ENCODE measurements at regions of chr6 and their contacts with region 1.

Region 1: DNA sequence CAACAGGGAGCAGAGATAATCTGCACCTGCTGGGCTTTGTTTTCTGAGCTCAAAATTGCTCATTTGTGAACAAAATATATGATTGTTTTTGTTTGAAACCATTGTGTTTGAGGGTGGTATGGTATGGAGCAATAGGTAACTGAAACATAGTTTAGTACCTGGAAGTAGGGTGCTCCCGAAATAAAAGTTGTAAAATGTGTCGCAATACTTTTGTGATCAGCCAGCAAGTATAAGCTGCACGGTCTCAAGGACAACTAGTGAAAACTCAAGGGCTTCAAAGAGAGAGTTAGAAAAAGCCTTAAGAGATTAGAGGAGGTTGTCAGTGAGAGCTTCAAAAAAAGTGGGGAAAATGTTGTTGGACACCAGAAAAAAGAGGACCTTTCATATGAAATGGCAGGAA is 579.8 kb upstream of the POU3F2 start:
- DNase-seq: no peak
- H3K4me3 ChIP-seq: no peak overlapping the region
- H3K27ac ChIP-seq: no peak overlapping the region
- H3K4me1 ChIP-seq: no peaks in the 10 kb centered on the region
- H3K27me3 ChIP-seq: no peaks in the 10 kb centered on the region
- CTCF ChIP-seq: no peak

Region 2: DNA sequence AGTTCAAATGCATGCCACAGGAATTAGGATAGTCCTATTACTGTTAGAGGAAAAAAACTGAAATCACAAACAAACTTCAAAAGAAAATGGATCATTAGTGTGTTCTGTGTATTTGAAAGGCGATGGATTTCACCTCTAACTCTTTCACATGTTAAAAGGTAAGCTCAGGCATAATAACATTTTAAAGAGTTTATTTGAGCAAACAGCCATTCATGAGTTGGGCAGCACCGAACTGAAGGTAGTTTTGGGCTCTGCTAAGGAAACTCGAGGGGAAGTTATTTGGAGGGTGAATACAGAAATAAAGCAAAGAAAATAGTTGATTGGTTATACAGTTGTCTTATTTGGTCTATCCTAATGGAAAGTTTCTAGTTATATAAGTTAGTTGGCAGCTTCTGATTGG is 33.3 kb after region 1 on chr6:
- CTCF ChIA-PET with region 1: no interaction called
- POLR2A ChIA-PET with region 1: no interaction called
- intact Hi-C with region 1: loop called (anchors 2 kb)
- DNase-seq: no peak
- H3K4me3 ChIP-seq: no peak overlapping the region
- H3K27ac ChIP-seq: no peak overlapping the region
- H3K4me1 ChIP-seq: no peaks in the 10 kb centered on the region
- H3K27me3 ChIP-seq: no peaks in the 10 kb centered on the region
- CTCF ChIP-seq: no peak

Region 3: GRCh38 chr6:98547634-98548033 is 293.0 kb after region 1 on chr6:
- CTCF ChIA-PET with region 1: no interaction called
- POLR2A ChIA-PET with region 1: no interaction called
- intact Hi-C with region 1: no loop called
- DNase-seq: no peak
- H3K4me3 ChIP-seq: no peak overlapping the region
- H3K27ac ChIP-seq: no peak overlapping the region
- H3K4me1 ChIP-seq: no peaks in the 10 kb centered on the region
- H3K27me3 ChIP-seq: no peaks in the 10 kb centered on the region
- CTCF ChIP-seq: no peak

Measured in PC-9 (cell line).